GM18951 (cell line): ENCODE measurements at regions of chr11 and their contacts with region 1.

Region 1: DNA sequence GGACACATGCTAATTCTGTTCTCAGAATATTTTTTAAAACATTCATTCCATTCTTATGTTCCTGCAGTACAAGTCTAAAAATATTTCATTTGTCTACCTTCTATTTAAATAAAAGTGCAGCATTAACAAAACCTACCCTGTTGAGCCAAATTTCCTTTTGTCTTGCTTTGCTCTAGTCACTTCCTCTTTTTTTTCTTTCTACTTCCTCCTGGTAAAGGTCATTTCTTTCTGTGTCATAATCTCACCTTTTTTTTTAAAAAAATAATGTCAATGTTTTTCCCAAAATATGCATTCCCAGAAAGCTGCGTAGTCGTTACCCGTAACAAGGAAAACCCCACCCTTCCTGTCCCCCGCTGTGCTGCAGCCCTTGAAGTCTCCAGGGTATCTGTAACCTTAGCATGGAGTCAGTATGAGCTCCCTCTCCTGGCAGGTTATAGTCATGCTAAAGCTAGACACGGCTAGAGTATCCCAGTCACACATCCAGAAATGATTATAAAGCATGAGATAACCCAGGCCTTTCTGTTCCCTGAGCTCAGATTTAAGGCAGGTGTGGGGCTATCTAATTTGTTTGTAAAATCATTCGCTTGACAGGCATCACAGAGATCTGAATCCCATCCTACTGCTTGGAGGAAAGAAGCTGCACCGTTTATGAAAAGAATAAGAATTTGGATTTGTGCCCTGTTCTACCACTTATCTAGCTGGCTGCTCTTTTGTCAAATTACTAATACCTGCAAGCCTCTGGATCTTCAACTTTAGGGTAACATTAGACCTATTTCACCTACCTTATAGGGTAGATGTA is 51.1 kb upstream of the EED start:
- POLR2A ChIP-seq: no peak

Region 2: DNA sequence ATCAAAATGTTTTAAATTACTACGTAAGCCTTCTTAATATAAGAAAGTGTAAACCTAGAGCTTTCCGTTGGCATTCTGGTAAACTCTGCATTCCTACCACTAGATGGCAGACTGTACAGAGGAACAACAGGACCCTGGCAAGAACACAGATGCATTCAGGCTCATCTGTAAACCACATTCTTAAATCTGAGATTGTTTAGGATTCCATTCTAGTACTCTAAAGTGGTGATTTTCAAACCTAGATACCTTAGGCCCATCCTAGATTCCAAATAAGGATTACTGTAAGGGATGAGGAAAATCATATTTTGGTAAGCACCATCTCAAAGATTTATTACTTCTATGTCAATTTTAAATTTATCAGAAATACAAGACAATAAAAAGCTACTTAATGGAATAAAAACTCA is 151.5 kb before region 1 on chr11:
- in situ Hi-C with region 1: loop called (anchors 10 kb)
- POLR2A ChIP-seq: no peak

Region 3: DNA sequence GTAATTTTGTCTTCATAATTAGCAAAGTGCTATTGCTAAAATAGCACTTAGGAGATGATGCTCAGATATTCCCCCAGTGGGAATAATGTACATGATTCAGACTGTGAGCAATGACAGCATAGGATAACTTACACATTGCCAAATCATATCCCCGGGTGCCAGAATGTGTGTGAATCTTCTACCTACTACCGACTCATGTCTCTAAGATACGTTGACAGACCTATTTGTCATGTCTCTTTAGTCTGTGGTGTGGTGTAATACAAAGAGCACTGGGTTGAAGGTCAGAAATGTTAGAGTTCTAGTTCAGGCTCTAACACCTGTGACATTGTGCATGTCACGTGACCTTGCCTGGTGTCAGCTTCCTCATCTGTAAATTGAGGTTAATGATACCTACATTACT is 93.6 kb before region 1 on chr11:
- in situ Hi-C with region 1: no loop called
- POLR2A ChIP-seq: no peak